PC-9 (cell line): ENCODE measurements at regions of chr5 and their contacts with region 1.

Region 1: DNA sequence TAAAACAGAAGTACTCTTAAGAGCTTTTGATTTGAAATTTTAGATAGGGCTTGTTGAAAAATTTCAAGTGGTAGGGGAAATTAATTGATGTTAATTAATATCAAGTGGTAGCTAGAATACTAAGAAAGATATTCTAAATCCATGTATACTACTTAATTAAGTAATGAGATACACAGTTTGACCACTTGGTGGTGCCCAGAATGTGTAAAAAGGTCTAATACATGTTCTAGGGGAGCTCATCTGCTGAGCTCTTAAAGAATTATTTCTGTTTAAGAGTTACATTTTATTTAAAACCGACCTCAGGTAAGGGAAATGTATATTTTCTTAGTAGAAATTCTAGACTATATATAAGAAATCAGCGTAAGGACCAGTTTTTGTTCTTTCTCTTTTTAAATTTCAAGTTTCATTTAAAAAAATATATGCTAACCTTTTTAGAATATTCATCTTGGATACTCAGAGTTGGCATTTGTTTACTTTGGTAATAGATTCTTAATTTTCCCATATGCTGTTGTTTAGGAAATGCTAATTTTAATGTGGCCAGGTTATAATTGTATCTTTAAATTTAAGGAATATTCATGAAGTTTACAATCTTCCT is 61.5 kb downstream of the LNPEP start:
- DNase-seq: peak in 1 of 2 experiments; percentile 43
- H3K4me3 ChIP-seq: no peak overlapping the region
- H3K27ac ChIP-seq: no peak overlapping the region
- H3K4me1 ChIP-seq: no peaks in the 10 kb centered on the region
- H3K27me3 ChIP-seq: no peaks in the 10 kb centered on the region
- CTCF ChIP-seq: peak; percentile 77

Region 2: DNA sequence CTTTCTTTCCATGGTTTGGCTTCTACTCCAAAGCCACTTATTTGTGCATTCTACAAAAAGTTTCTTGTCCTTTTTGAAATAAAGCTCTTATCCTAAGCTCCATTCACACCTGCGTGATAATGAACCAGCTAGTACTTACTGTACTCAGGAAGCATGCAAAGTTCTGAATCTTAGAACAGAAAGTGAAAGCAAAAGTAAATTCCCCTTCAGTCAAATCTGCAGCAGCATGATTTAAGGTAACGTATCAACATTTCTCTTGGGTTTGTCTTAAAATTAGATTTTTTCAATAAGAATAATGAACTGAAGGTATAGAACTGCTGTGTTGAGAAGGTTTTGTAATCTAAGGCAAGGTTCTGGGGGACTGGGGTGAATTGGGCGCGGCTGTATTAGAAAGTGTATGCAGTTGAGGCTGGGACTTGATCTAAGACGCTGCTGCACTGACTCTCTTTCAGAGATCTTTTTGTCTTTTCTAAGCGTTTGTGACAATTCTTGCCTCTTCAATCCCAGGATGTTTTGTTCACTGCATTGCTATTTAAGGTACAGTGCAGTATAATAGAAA is 121.0 kb before region 1 on chr5 and contains the start of gene ERAP2:
- CTCF ChIA-PET with region 1: no interaction called
- POLR2A ChIA-PET with region 1: no interaction called
- intact Hi-C with region 1: loop called (anchors 10 kb)
- DNase-seq: peak in 1 of 2 experiments; percentile 60
- H3K4me3 ChIP-seq: peak within 1 kb of the TSS; percentile 64
- H3K27ac ChIP-seq: 0 out of 2 replicates have a peak within 1 kb of the TSS, but pooled peaks have one; percentile 1
- H3K4me1 ChIP-seq: peaks cover 29% of the 10 kb centered on the region
- H3K27me3 ChIP-seq: no peaks in the 10 kb centered on the region
- CTCF ChIP-seq: no peak
- total RNA-seq, gene ERAP2: 48.2 and 51.9 TPM in 2 replicates

Region 3: GRCh38 chr5:97142521-97143254 is 145.3 kb after region 1 on chr5 and contains the start of gene LIX1:
- CTCF ChIA-PET with region 1: interaction called, 5 read pairs
- POLR2A ChIA-PET with region 1: no interaction called
- intact Hi-C with region 1: loop called (anchors 5 kb)
- DNase-seq: peak in 1 of 2 experiments; percentile 26
- H3K4me3 ChIP-seq: no peak within 1 kb of the TSS
- H3K27ac ChIP-seq: no peak within 1 kb of the TSS
- H3K4me1 ChIP-seq: no peaks in the 10 kb centered on the region
- H3K27me3 ChIP-seq: no peaks in the 10 kb centered on the region
- CTCF ChIP-seq: peak; percentile 73
- total RNA-seq, gene LIX1: not detected in 2 replicates

Region 4: DNA sequence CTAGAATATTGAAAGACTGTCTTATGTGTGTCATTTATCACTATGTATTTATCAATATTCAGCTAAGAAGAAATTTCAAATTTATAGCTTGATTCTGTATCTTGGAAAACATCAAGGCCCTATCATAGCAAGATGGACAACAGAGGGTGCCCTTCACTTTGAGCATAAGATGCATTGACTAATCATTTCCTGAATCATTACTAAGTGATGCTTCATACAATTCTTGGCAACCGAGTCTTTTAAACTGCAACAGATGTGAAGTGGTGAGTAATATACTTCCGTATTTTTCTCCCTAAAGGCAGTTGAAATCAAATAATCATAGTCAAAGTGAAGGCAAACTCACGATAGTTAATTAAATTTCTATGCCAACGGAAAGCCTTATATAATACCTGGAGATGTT is 1457.5 kb after region 1 on chr5:
- CTCF ChIA-PET with region 1: no interaction called
- POLR2A ChIA-PET with region 1: interaction called, 12 read pairs
- intact Hi-C with region 1: no loop called
- DNase-seq: peak in 1 of 2 experiments; percentile 50
- H3K4me3 ChIP-seq: no peak overlapping the region
- H3K27ac ChIP-seq: no peak overlapping the region
- H3K4me1 ChIP-seq: no peaks in the 10 kb centered on the region
- H3K27me3 ChIP-seq: no peaks in the 10 kb centered on the region
- CTCF ChIP-seq: no peak; the same call in 1 of the 2 replicates